ENCODE measurements at regions of chr1 and their contacts with region 1.

Region 1: DNA sequence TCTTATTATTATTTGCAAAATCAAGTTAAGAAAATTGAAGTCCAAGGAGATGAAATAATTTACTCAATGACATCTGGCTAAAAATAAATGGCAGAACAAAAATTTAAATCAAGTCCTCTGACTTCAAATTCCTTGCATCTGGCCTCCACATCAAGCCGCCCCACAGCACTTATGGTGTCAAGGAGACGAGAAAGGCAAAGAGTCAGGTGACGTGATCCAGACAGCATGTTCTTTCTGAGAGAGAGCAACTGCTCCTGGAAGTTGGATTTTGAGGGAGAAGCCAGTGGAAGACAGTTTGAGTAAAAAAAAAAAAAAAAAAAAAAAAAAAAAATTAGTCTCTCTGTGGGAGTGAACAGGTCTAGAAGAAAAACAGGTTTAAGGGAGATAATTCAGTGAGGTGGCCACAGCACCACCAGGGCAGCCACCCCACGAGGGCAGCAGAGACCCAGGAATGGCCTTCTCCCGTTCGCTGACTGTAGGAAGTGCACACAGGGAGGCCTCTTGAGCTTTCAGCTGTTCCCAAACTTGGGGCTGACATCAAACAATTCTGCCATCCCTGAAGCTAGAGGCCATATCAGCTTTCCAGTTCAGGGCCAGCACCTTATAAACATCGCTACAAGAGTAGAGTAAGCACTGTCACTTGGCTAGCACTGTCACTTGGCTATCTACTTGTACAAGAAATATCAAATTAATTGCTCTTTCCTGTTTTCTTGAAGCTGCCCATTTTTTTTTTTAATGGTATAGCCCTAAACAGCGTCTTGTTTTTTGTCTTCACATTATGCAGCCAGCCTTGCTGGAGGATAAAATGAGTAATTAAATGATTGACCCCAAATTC is 7.8 kb downstream of the C1orf162 start:
- DNase-seq: peak in 4 of 5 donors; percentile 41 to 54 (median 52)
- H3K4me3 ChIP-seq: no peak overlapping the region
- H3K4me3 Mint-ChIP-seq: no peak overlapping the region
- H3K27ac ChIP-seq: no peak overlapping the region
- H3K27ac Mint-ChIP-seq: peak overlapping the region in 3 of 7 donors; percentile 11 to 80 (median 47)
- H3K4me1 ChIP-seq: peaks cover 29% of the 10 kb centered on the region
- H3K4me1 Mint-ChIP-seq: peaks cover 31 to 55% (median 44%) of the 10 kb centered on the region in 4 donors
- H3K27me3 ChIP-seq: no peaks in the 10 kb centered on the region
- H3K27me3 Mint-ChIP-seq: no peaks in the 10 kb centered on the region

Region 2: DNA sequence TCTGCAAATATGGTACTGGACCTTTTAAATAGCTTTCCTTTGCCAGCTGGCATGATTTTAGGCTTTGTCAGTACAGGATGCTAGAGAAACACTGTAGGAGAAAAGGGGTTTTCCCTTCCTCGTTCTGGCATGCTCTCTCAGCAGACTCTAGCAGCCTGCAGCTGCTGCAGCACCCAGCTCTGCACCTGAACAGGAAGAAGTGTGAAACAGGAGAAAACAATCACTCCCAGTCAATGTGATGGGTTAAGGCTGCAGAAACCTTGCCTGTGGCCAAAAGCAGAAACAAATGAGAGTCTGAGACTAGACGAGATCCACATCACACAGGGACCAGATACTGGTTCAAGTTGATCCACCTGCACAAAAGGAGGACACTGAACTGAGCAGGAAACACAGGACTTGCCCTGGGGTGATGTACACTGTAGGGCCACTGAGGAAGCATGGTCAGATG is 75.3 kb before region 1 on chr1:
- CTCF ChIA-PET with region 1: no interaction called
- POLR2A ChIA-PET with region 1: no interaction called
- intact Hi-C with region 1: no loop called
- DNase-seq: peak; percentile 53 to 71 (median 61)
- H3K4me3 ChIP-seq: no peak overlapping the region
- H3K4me3 Mint-ChIP-seq: peak overlapping the region; percentile 47 to 80 (median 68)
- H3K27ac ChIP-seq: no peak overlapping the region
- H3K27ac Mint-ChIP-seq: peak overlapping the region; percentile 43 to 93 (median 69)
- H3K4me1 ChIP-seq: peaks cover 33% of the 10 kb centered on the region
- H3K4me1 Mint-ChIP-seq: peaks cover 23 to 32% (median 29%) of the 10 kb centered on the region in 4 donors
- H3K27me3 ChIP-seq: no peaks in the 10 kb centered on the region
- H3K27me3 Mint-ChIP-seq: no peaks in the 10 kb centered on the region

Region 3: DNA sequence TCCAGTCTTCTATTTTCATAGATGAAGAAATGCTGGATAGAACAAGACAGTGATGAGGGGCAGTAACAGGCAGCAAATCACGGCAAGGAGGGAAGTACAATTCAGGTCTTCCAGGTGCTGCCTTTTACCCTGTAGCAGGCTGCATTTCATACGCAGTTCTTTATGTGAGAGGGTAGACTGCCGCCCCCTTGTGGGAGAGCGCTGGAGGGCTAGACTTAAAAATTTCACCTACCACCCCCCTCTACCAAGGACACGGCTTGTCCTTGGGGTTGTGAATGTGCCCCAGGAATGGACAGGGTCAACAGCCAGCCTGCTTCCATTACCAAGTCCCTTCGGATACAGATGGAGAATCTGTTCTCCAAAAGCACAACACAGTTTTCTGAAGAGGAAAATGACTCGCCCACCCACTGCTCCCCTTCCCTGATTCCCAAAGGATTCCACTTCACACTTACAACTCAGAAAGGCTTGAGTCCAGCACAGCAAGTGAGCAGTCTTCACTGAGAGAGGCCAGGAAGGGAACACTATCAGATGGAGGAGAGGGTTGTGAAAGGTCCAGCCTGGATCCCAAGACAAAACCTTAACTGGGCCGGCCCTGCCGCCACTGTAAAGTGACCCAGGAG is 39.9 kb before region 1 on chr1:
- CTCF ChIA-PET with region 1: interaction called, 5 read pairs
- POLR2A ChIA-PET with region 1: interaction called, 164 read pairs
- intact Hi-C with region 1: no loop called
- DNase-seq: peak; percentile 62 to 72 (median 64)
- H3K4me3 ChIP-seq: no peak overlapping the region
- H3K4me3 Mint-ChIP-seq: no peak overlapping the region
- H3K27ac ChIP-seq: peak overlapping the region; percentile 12
- H3K27ac Mint-ChIP-seq: peak overlapping the region; percentile 68 to 82 (median 77)
- H3K4me1 ChIP-seq: peaks cover 26% of the 10 kb centered on the region
- H3K4me1 Mint-ChIP-seq: peaks cover 16 to 44% (median 27%) of the 10 kb centered on the region in 4 donors
- H3K27me3 ChIP-seq: no peaks in the 10 kb centered on the region
- H3K27me3 Mint-ChIP-seq: no peaks in the 10 kb centered on the region

Region 4: GRCh38 chr1:111471012-111471411 is 10.6 kb before region 1 on chr1:
- CTCF ChIA-PET with region 1: interaction called, 15 read pairs
- POLR2A ChIA-PET with region 1: interaction called, 11 read pairs
- intact Hi-C with region 1: no loop called
- DNase-seq: peak; percentile 84 to 95 (median 91)
- H3K4me3 ChIP-seq: peak overlapping the region; percentile 9 to 39
- H3K4me3 Mint-ChIP-seq: no peak overlapping the region
- H3K27ac ChIP-seq: peak overlapping the region; percentile 68
- H3K27ac Mint-ChIP-seq: no peak overlapping the region
- H3K4me1 ChIP-seq: peaks cover 80% of the 10 kb centered on the region
- H3K4me1 Mint-ChIP-seq: peaks cover 18 to 29% (median 25%) of the 10 kb centered on the region in 4 donors
- H3K27me3 ChIP-seq: no peaks in the 10 kb centered on the region
- H3K27me3 Mint-ChIP-seq: no peaks in the 10 kb centered on the region

Region 5: GRCh38 chr1:111592389-111593361 is 111.1 kb after region 1 on chr1:
- CTCF ChIA-PET with region 1: interaction called, 3 read pairs
- POLR2A ChIA-PET with region 1: interaction called, 18 read pairs
- intact Hi-C with region 1: no loop called
- DNase-seq: peak; percentile 66 to 98 (median 77)
- H3K4me3 ChIP-seq: peak overlapping the region in 1 of 2 donors; percentile 15
- H3K4me3 Mint-ChIP-seq: peak overlapping the region; percentile 6 to 81 (median 69)
- H3K27ac ChIP-seq: peak overlapping the region; percentile 46
- H3K27ac Mint-ChIP-seq: peak overlapping the region; percentile 85 to 94 (median 92)
- H3K4me1 ChIP-seq: peaks cover 68% of the 10 kb centered on the region
- H3K4me1 Mint-ChIP-seq: peaks cover 48 to 57% (median 51%) of the 10 kb centered on the region in 4 donors
- H3K27me3 ChIP-seq: no peaks in the 10 kb centered on the region
- H3K27me3 Mint-ChIP-seq: no peaks in the 10 kb centered on the region

Region 6: DNA sequence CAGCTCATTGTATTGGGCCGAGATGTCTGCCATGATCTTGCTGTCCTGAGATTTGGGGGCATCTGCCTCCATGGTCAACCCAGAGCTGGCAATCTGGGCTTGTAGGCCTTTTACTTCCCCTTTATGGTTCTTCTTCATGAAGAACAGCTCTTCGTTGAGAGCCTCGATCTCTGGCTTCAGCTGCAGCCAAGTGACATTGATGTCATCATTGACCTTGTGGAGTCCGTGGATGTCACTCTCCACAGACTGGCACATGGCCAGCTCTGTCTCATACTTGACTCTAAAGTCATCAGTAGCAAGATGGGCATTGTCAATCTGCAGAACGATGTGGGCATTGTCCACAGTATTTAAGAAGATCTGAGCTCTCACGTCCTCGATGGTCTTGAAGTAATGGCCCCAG is 167.2 kb after region 1 on chr1:
- CTCF ChIA-PET with region 1: no interaction called
- POLR2A ChIA-PET with region 1: no interaction called
- intact Hi-C with region 1: no loop called
- DNase-seq: no peak
- H3K4me3 ChIP-seq: no peak overlapping the region
- H3K4me3 Mint-ChIP-seq: peak overlapping the region in 5 of 8 donors; percentile 36 to 73 (median 56)
- H3K27ac ChIP-seq: peak overlapping the region; percentile 0
- H3K27ac Mint-ChIP-seq: peak overlapping the region; percentile 28 to 84 (median 77)
- H3K4me1 ChIP-seq: peaks cover 85% of the 10 kb centered on the region
- H3K4me1 Mint-ChIP-seq: peaks cover 68 to 92% (median 81%) of the 10 kb centered on the region in 4 donors
- H3K27me3 ChIP-seq: no peaks in the 10 kb centered on the region
- H3K27me3 Mint-ChIP-seq: no peaks in the 10 kb centered on the region

Region 7: GRCh38 chr1:111747282-111747734 is 265.7 kb after region 1 on chr1:
- CTCF ChIA-PET with region 1: interaction called, 9 read pairs
- POLR2A ChIA-PET with region 1: interaction called, 4 read pairs
- intact Hi-C with region 1: loop called (anchors 1 kb)
- DNase-seq: peak; percentile 57 to 69 (median 62)
- H3K4me3 ChIP-seq: no peak overlapping the region
- H3K4me3 Mint-ChIP-seq: no peak overlapping the region
- H3K27ac ChIP-seq: no peak overlapping the region
- H3K27ac Mint-ChIP-seq: peak overlapping the region in 1 of 7 donors; percentile 29
- H3K4me1 ChIP-seq: no peaks in the 10 kb centered on the region
- H3K4me1 Mint-ChIP-seq: peaks cover 0 to 6% (median 2%) of the 10 kb centered on the region in 4 donors
- H3K27me3 ChIP-seq: no peaks in the 10 kb centered on the region
- H3K27me3 Mint-ChIP-seq: no peaks in the 10 kb centered on the region

Region 8: GRCh38 chr1:112369392-112370285 is 888.0 kb after region 1 on chr1:
- CTCF ChIA-PET with region 1: no interaction called
- POLR2A ChIA-PET with region 1: no interaction called
- intact Hi-C with region 1: loop called (anchors 5 kb)
- DNase-seq: peak; percentile 69 to 76 (median 71)
- H3K4me3 ChIP-seq: no peak overlapping the region
- H3K4me3 Mint-ChIP-seq: peak overlapping the region in 5 of 8 donors; percentile 13 to 49 (median 26)
- H3K27ac ChIP-seq: no peak overlapping the region
- H3K27ac Mint-ChIP-seq: no peak overlapping the region
- H3K4me1 ChIP-seq: peaks cover 4% of the 10 kb centered on the region
- H3K4me1 Mint-ChIP-seq: peaks cover 3 to 5% (median 4%) of the 10 kb centered on the region in 4 donors
- H3K27me3 ChIP-seq: no peaks in the 10 kb centered on the region
- H3K27me3 Mint-ChIP-seq: peaks cover 28 to 32% of the 10 kb centered on the region in 2 donors